Left cardiac atrium (tissue), 4 donors: ENCODE measurements at regions of chr10 and their contacts with region 1.

Region 1: GRCh38 chr10:35379226-35380137 is 43.2 kb downstream of the CCNY start:
- DNase-seq: peak; percentile 76
- ATAC-seq: peak; percentile 84 to 90

Region 2: DNA sequence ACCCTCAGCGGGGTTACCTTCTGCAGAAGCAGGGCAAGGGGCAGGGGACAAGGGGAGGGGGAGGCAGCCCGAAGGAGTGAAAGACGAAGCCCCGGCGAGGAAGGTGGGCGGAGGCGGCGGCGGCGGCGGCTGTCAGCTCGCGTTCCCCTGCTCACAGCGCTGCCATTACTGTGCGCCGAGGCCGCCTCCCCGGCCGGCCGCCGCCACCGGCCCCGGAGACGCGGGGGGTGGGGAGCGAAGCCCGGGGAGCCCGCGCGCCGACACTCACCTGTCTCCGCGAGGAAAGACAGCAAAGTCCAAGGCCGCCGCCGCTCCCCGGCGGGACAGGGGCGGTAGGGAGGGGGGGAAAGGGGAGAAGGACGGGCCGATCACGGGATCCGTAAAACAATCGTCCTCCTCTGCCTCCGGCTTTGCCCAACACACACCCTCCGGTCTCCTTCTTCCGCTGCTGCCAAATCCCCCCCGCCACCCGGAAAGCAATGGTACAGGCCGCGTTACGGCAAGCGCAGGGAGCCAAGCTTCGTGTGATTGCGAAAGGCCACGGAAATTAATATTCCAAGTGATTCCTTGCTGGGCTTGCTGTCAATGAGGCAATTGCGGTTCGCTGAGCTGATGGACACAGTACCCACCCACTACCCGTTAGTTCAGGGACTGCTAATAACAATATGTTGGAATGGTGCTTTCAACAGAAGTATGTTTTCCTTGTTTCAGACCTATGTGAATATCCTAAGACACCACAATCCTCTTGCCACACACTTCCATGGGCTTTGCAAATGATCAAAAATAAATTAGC is 289.1 kb before region 1 on chr10 and contains the start of gene CUL2:
- intact Hi-C with region 1: no loop called
- DNase-seq: peak; percentile 92
- ATAC-seq: peak; percentile 98
- total RNA-seq, gene CUL2: 26.4 to 30.1 TPM

Region 3: DNA sequence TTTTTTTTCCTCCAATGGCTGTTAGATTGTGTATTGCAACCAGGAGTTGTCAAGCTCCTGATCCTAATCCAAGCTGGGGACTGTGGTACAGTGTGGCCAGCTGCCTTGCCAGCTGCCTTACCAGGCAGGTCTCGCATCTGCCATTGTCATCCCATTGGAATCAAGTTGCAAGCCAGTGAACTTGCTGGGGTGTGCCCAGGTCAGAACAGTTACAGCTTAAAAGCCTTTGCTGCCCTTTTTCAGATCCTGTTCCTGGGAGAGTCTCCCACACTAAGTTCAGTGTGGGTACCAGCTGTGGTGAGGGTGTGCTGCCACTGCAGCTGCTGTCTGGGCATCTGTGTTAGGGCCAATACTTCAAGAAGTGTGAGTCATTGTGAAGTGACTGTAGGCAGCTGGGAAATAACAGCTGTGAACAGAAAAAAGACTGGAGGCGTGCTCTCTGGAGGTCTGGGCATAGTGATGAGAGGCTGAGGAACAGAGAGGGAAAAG is 29.7 kb after region 1 on chr10:
- intact Hi-C with region 1: no loop called
- DNase-seq: no peak
- ATAC-seq: peak; percentile 73 to 92

Region 4: DNA sequence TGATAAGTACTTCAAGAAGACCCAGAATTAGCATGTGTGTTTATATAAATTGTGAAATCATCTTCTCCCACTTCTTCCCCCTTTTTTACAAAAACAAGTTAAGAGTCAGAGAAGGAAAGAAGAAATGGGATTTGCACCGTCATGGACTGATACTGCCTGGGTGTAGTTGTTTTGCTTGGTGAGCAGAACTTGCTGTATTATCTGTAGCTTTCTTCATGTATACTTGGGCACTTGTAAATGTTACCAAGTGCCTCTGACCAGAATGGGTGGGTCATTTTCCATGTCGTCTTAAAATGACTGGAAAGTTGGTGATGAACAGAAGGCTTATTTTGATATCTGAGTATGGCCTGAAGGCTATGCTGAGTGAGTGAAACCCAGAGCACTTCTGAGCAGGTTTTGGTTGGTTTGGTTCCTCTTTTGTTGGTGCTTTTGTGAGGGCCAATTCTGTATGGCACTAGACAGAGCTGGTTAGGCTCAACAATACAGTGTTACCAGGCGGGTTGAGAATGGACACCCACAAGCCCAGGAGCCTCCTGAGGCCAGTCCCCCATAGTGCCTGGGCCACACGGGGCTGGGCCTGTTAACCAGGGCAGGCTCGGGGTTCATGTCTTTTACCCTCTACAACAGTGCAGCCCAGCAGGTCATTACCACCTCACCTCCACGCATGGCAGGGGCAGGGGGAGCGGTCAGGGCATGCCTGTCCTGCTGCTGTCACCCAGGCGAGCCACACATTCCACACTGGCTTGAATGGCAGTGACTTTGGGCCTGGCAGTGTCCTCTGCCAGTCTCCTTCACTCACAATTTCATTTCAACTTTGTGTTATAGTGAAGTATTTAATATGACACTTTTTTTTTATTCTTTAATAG is 71.9 kb after region 1 on chr10:
- intact Hi-C with region 1: loop called in 1 of 2 experiments (anchors 5 kb)
- DNase-seq: no peak
- ATAC-seq: peak; percentile 45 to 58